ENCODE measurements at regions of chr7 and their contacts with region 1.

Region 1: DNA sequence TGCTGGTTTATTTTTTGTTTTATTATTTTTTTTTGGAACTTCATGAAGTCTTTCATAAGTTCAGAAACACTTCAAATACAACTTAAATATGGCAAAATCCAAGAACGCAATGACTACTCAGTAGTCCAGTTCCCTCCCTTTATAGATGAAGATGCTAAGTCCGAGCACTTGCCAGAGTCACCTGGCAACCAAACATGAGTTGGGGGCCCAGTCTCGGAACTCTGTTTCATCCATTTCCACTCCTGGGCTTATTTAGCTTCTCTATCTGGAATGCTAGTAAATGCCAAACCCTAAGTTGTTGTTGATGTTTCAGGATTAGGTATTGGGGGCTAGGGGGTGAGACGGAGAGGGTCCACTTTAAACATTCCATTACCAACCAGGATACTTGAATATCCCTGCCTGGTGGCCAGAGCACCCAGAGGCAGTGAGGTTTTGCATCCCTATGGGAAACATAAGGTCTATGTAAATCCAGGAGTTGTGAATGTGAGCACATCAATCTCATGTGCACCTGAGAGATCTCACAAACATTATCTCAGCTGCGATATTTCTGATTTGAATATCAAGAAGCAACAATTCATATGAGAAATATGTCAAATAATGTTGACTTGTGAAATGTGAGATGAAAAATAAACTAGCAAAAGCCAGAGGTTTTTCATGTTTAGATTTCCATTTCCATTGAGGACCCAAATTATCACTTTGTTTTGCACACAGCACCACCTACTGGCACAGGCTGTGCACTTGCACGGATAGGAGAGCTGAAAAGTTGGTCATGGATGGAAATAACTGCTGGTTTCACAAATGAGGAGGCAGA is 129.3 kb downstream of the PKD1L1 start:
- DNase-seq: peak; percentile 86
- H3K4me3 ChIP-seq: no peak overlapping the region
- H3K27ac ChIP-seq: no peak overlapping the region
- H3K4me1 ChIP-seq: no peaks in the 10 kb centered on the region
- H3K27me3 ChIP-seq: no peaks in the 10 kb centered on the region
- CTCF ChIP-seq: peak; percentile 86 to 98 (median 93)
- POLR2A ChIP-seq: no peak

Region 2: GRCh38 chr7:47428092-47428767 is 390.8 kb before region 1 on chr7:
- intact Hi-C with region 1: loop called (anchors 10 kb)
- DNase-seq: no peak
- H3K4me3 ChIP-seq: no peak overlapping the region
- H3K27ac ChIP-seq: no peak overlapping the region
- H3K4me1 ChIP-seq: no peaks in the 10 kb centered on the region
- H3K27me3 ChIP-seq: no peaks in the 10 kb centered on the region
- CTCF ChIP-seq: no peak
- POLR2A ChIP-seq: no peak